Activated naive CD8-positive, alpha-beta T cell treated with anti-CD3 and anti-CD28 coated beads, Interleukin-2, amount 10 ng/mL, durations not matched to agents 7 days and 5 days (primary cell): ENCODE measurements at regions of chr10 and their contacts with region 1.

Region 1: DNA sequence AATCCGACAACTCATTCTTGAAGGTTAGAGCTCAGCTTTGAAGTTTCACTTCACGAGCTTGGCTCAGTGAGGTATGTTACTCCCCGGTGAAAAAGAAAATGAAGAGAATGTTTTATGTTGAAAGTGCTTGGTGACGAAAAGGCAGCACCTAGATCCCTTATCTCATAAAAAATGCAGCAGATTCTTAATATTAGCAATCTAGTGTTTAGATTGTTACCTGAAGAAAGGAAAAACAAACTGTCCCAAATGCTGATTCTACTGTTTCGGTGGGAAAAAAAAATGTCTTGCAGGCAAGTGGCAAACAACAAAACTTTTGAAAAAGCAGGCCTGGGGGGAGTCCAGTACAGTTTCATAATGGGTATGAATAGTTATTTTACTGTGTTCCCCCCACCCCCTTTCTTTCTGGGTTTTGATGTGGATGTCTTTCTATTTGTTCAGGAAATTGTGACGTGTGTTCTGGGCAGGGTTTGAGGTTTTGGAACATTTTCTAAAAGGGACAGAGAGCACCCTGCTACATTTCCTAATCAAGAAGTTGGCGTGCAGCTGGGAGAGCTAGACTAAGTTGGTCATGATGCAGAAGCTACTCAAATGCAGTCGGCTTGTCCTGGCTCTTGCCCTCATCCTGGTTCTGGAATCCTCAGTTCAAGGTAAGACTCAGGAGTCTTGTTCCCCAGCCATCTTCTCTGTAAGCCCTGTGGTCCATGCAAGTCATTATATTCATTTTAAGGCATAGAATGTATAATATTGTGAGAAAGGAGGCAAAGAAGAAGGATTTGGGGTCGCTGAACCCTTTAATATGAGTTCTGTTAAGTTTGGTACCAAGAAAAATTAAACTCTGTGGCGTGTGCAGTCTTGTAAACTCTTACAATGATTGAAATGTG is at the start of gene SRGN:
- DNase-seq: peak; percentile 65
- ATAC-seq: peak; percentile 57
- H3K4me3 Mint-ChIP-seq: peak within 1 kb of the TSS; percentile 86
- H3K27ac Mint-ChIP-seq: peak within 1 kb of the TSS; percentile 93
- H3K4me1 Mint-ChIP-seq: peaks cover 47% of the 10 kb centered on the region
- H3K27me3 Mint-ChIP-seq: no peaks in the 10 kb centered on the region
- total RNA-seq, gene SRGN: 162 to 167 TPM

Region 2: DNA sequence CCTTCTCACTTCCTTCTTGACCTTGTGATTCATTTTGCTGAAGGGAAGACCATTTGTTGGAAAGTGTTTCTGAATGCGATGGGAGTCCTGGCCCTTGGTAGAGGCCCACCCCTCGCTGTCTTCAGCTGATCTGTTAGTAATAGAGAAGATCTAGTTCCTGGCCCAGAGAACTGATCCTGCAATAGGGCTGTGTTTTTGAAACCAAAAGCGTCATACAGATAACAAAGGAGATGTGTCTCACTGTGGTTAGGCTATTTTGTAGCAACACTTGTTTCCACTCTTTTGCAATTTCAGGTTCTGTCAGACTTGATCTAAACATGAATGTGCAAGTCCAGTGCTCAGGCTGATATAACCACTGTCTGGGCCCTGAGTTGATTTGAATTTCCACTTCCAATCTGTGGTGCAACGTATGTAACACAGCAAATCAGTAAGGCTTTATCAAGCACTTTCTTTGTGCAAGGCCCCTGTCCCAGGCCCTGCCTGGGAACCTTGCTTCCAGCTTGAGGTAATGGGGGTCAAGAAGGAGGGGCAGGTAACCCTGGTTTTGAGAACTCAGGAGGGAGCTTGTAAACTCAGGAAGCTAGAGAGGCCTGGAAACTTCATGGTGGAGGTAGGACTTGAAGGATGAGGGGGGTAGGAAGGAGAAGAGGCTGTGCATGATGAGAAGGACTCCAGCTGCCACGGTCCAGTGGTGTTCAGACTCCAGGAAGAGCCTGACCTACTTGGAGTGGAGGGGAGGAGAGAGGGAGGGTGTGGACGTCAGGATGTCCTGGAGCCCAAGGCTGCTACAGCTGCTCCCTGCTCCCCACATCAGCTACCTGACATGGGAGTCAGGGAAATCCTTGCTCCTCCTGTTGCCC is 42.2 kb before region 1 on chr10:
- POLR2A ChIA-PET with region 1: interaction called, 21 read pairs
- DNase-seq: peak; percentile 43
- ATAC-seq: peak; percentile 63
- H3K4me3 Mint-ChIP-seq: peak overlapping the region; percentile 58
- H3K27ac Mint-ChIP-seq: peak overlapping the region; percentile 90
- H3K4me1 Mint-ChIP-seq: peaks cover 25% of the 10 kb centered on the region
- H3K27me3 Mint-ChIP-seq: no peaks in the 10 kb centered on the region

Region 3: GRCh38 chr10:69061305-69062161 is 26.3 kb before region 1 on chr10:
- POLR2A ChIA-PET with region 1: interaction called, 10 read pairs
- DNase-seq: peak; percentile 55
- ATAC-seq: peak; percentile 84
- H3K4me3 Mint-ChIP-seq: peak overlapping the region; percentile 83
- H3K27ac Mint-ChIP-seq: peak overlapping the region; percentile 82
- H3K4me1 Mint-ChIP-seq: peaks cover 45% of the 10 kb centered on the region
- H3K27me3 Mint-ChIP-seq: peaks cover 4% of the 10 kb centered on the region

Region 4: GRCh38 chr10:69172241-69172982 is 84.6 kb after region 1 on chr10:
- POLR2A ChIA-PET with region 1: no interaction called
- DNase-seq: no peak
- ATAC-seq: no peak
- H3K4me3 Mint-ChIP-seq: no peak overlapping the region
- H3K27ac Mint-ChIP-seq: no peak overlapping the region
- H3K4me1 Mint-ChIP-seq: peaks cover 2% of the 10 kb centered on the region
- H3K27me3 Mint-ChIP-seq: no peaks in the 10 kb centered on the region